Panc1 (cell line): ENCODE measurements at regions of chr1 and their contacts with region 1.

Region 1: GRCh38 chr1:45430490-45430889 is 60.5 kb downstream of the TESK2 start:
- DNase-seq: no peak
- ATAC-seq: no peak
- H3K4me3 ChIP-seq: no peak overlapping the region
- H3K27ac ChIP-seq: no peak overlapping the region
- H3K4me1 ChIP-seq: no peaks in the 10 kb centered on the region
- H3K27me3 ChIP-seq: no peaks in the 10 kb centered on the region
- CTCF ChIP-seq: no peak

Region 2: GRCh38 chr1:44730741-44731512 is 699.6 kb before region 1 on chr1 and contains the start of gene RNU5D-1:
- CTCF ChIA-PET with region 1: no interaction called
- POLR2A ChIA-PET with region 1: interaction called, 12 read pairs
- in situ Hi-C with region 1: no loop called
- intact Hi-C with region 1: no loop called
- DNase-seq: peak; percentile 99
- ATAC-seq: peak; percentile 91
- H3K4me3 ChIP-seq: peak within 1 kb of the TSS; percentile 9 to 38; a peak in 3 of 4 replicates
- H3K27ac ChIP-seq: peak within 1 kb of the TSS; percentile 97
- H3K4me1 ChIP-seq: peaks cover 5% of the 10 kb centered on the region; the same call in 1 of the 2 replicates
- H3K27me3 ChIP-seq: no peaks in the 10 kb centered on the region
- CTCF ChIP-seq: peak; percentile 96
- total RNA-seq, gene RNU5D-1: not detected

Region 3: DNA sequence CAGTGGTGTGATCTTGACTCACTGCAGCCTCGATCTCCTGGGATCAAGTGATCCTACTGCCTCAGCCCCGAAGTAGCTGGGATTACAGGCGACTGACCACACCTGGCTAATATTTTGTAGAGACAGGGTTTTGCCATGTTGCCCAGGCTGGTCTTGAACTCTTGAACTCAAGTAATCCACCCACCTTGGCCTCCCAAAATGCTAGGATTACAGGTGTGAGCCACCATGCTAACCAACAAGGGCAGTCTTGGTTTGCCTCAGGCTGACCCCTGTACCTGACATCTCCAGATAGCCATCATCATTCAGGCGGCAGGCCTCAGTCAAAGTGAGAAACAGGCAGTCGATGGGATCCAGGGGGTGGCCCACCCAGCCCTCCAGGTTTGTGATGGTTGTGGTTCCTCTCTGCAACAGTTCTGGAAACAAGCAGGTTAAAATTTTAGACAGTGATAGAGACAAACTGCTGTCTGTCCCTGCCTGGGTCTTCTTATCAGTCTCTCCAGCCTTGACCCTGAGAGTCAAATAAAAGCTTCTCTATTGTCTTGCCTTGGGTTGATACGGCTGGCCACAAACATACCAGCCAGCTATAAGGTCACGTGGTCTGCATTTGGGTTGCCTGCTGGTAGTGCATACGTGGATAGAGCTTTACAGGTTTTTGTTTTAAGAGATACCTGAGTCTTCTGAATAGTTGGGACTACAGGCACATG is 391.7 kb before region 1 on chr1:
- CTCF ChIA-PET with region 1: no interaction called
- POLR2A ChIA-PET with region 1: interaction called, 10 read pairs
- in situ Hi-C with region 1: no loop called
- intact Hi-C with region 1: no loop called
- DNase-seq: no peak
- ATAC-seq: no peak
- H3K4me3 ChIP-seq: no peak overlapping the region
- H3K27ac ChIP-seq: no peak overlapping the region
- H3K4me1 ChIP-seq: no peaks in the 10 kb centered on the region
- H3K27me3 ChIP-seq: no peaks in the 10 kb centered on the region
- CTCF ChIP-seq: no peak

Region 4: DNA sequence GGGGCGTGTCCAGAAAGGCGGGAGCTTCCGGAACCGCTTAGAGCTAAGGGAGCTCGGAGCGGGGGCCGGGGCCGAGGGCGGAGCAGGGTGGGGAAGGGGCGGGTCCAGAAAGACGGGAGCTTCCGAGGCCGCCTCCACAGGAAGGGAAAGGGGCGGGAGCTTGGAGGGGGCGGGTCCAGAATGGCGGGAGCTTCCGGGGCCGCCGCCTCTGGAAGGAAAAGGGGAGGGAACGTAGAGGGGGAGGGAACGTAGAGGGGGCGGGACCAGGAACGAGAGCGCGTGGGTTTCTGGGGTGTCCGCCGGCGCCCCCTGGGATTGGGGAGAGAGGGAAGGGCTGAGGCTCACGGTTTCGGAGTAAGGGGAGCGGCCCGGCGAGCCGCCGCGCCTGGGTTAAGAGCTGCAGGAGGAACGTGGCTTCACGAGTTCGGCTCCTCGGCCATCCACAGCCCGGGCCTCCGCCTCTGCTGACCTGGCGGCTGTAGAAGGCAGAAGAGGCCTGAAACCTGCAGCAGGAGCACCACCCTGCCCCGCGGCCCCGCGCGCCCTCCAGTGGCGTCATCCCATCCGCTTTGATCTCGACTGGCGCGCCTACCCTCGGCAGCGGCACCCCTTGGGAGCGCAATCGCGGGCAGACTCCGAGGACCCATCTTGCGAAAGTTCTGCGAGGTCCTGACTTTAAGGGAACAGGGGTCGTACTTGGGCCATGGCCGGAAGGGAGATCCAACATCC is 126.7 kb before region 1 on chr1:
- CTCF ChIA-PET with region 1: no interaction called
- POLR2A ChIA-PET with region 1: no interaction called
- in situ Hi-C with region 1: no loop called
- intact Hi-C with region 1: no loop called
- DNase-seq: peak; percentile 75
- ATAC-seq: peak; percentile 97
- H3K4me3 ChIP-seq: peak overlapping the region; percentile 65 to 80
- H3K27ac ChIP-seq: peak overlapping the region; percentile 91
- H3K4me1 ChIP-seq: peaks cover 8% of the 10 kb centered on the region
- H3K27me3 ChIP-seq: no peaks in the 10 kb centered on the region
- CTCF ChIP-seq: peak; percentile 93

Region 5: GRCh38 chr1:45373573-45373972 is 56.9 kb before region 1 on chr1:
- CTCF ChIA-PET with region 1: interaction called, 12 read pairs
- POLR2A ChIA-PET with region 1: no interaction called
- in situ Hi-C with region 1: no loop called
- intact Hi-C with region 1: no loop called
- DNase-seq: no peak
- ATAC-seq: no peak
- H3K4me3 ChIP-seq: no peak overlapping the region
- H3K27ac ChIP-seq: no peak overlapping the region
- H3K4me1 ChIP-seq: no peaks in the 10 kb centered on the region
- H3K27me3 ChIP-seq: no peaks in the 10 kb centered on the region
- CTCF ChIP-seq: no peak

Region 6: GRCh38 chr1:45512641-45513054 is 82.2 kb after region 1 on chr1:
- CTCF ChIA-PET with region 1: interaction called, 16 read pairs
- POLR2A ChIA-PET with region 1: no interaction called
- in situ Hi-C with region 1: no loop called
- intact Hi-C with region 1: no loop called
- DNase-seq: peak; percentile 64
- ATAC-seq: peak; percentile 75
- H3K4me3 ChIP-seq: no peak overlapping the region
- H3K27ac ChIP-seq: no peak overlapping the region
- H3K4me1 ChIP-seq: no peaks in the 10 kb centered on the region; the same call in 1 of the 2 replicates
- H3K27me3 ChIP-seq: no peaks in the 10 kb centered on the region
- CTCF ChIP-seq: peak; percentile 84